ENCODE measurements at regions of chr12 and their contacts with region 1.

Region 1: GRCh38 chr12:124551268-124552144 is 15.9 kb downstream of the NCOR2 start:
- DNase-seq: peak; percentile 20
- ATAC-seq: no peak
- H3K4me3 Mint-ChIP-seq: no peak overlapping the region
- H3K27ac Mint-ChIP-seq: no peak overlapping the region
- H3K4me1 Mint-ChIP-seq: peaks cover 78% of the 10 kb centered on the region
- H3K27me3 Mint-ChIP-seq: no peaks in the 10 kb centered on the region
- CTCF ChIP-seq: no peak

Region 2: GRCh38 chr12:124567661-124568373 is 16.3 kb after region 1 on chr12:
- CTCF ChIA-PET with region 1: interaction called, 9 read pairs
- POLR2A ChIA-PET with region 1: interaction called, 11 read pairs
- intact Hi-C with region 1: no loop called
- DNase-seq: peak; percentile 82
- ATAC-seq: peak; percentile 66
- H3K4me3 Mint-ChIP-seq: peak overlapping the region; percentile 76
- H3K27ac Mint-ChIP-seq: peak overlapping the region; percentile 81
- H3K4me1 Mint-ChIP-seq: peaks cover 30% of the 10 kb centered on the region
- H3K27me3 Mint-ChIP-seq: no peaks in the 10 kb centered on the region
- CTCF ChIP-seq: no peak

Measured in activated CD8-positive, alpha-beta T cell treated with anti-CD3 and anti-CD28 coated beads for 36 hours (primary cell).